ENCODE measurements at regions of chr7 and their contacts with region 1.

Region 1: GRCh38 chr7:150435390-150436073 is 14.9 kb upstream of the GIMAP8 start:
- DNase-seq: peak; percentile 74
- ATAC-seq: peak; percentile 92
- H3K4me3 Mint-ChIP-seq: peak overlapping the region; percentile 73
- H3K27ac Mint-ChIP-seq: peak overlapping the region; percentile 96
- H3K4me1 Mint-ChIP-seq: peaks cover 63% of the 10 kb centered on the region
- H3K27me3 Mint-ChIP-seq: peaks cover 2% of the 10 kb centered on the region
- CTCF ChIP-seq: no peak

Region 2: GRCh38 chr7:149873074-149873969 is 562.2 kb before region 1 on chr7 and contains the start of gene ATP6V0E2:
- CTCF ChIA-PET with region 1: no interaction called
- POLR2A ChIA-PET with region 1: no interaction called
- intact Hi-C with region 1: loop called (anchors 5 kb)
- DNase-seq: peak; percentile 86
- ATAC-seq: peak; percentile 95
- H3K4me3 Mint-ChIP-seq: peak within 1 kb of the TSS; percentile 86
- H3K27ac Mint-ChIP-seq: peak within 1 kb of the TSS; percentile 53
- H3K4me1 Mint-ChIP-seq: peaks cover 42% of the 10 kb centered on the region
- H3K27me3 Mint-ChIP-seq: no peaks in the 10 kb centered on the region
- CTCF ChIP-seq: no peak
- total RNA-seq, gene ATP6V0E2: 9.1 and 10.4 TPM in 2 replicates

Region 3: GRCh38 chr7:150322833-150323681 is 112.5 kb before region 1 on chr7 and contains the starts of genes ACTR3C and LRRC61:
- CTCF ChIA-PET with region 1: no interaction called
- POLR2A ChIA-PET with region 1: no interaction called
- intact Hi-C with region 1: loop called (anchors 1 kb)
- DNase-seq: peak; percentile 64
- ATAC-seq: peak; percentile 67
- H3K4me3 Mint-ChIP-seq: peak within 1 kb of the TSS; percentile 93
- H3K27ac Mint-ChIP-seq: peak within 1 kb of the TSS; percentile 92
- H3K4me1 Mint-ChIP-seq: peaks cover 54% of the 10 kb centered on the region
- H3K27me3 Mint-ChIP-seq: no peaks in the 10 kb centered on the region
- CTCF ChIP-seq: no peak
- total RNA-seq, gene ACTR3C: 10.1 and 14.3 TPM in 2 replicates
- total RNA-seq, gene LRRC61: 10.7 and 11.0 TPM in 2 replicates

Region 4: GRCh38 chr7:150368096-150368883 is 67.2 kb before region 1 on chr7 and contains the start of gene REPIN1:
- CTCF ChIA-PET with region 1: no interaction called
- POLR2A ChIA-PET with region 1: interaction called, 6 read pairs
- intact Hi-C with region 1: loop called (anchors 1 kb)
- DNase-seq: peak; percentile 85
- ATAC-seq: peak; percentile 43
- H3K4me3 Mint-ChIP-seq: peak within 1 kb of the TSS; percentile 95
- H3K27ac Mint-ChIP-seq: peak within 1 kb of the TSS; percentile 95
- H3K4me1 Mint-ChIP-seq: peaks cover 72% of the 10 kb centered on the region
- H3K27me3 Mint-ChIP-seq: no peaks in the 10 kb centered on the region
- CTCF ChIP-seq: no peak
- total RNA-seq, gene REPIN1: 106 and 116 TPM in 2 replicates

Region 5: GRCh38 chr7:150448789-150449147 is 13.2 kb after region 1 on chr7:
- CTCF ChIA-PET with region 1: interaction called, 7 read pairs
- POLR2A ChIA-PET with region 1: interaction called, 4 read pairs
- intact Hi-C with region 1: loop called (anchors 1 kb)
- DNase-seq: peak; percentile 55
- ATAC-seq: peak; percentile 86
- H3K4me3 Mint-ChIP-seq: peak overlapping the region; percentile 9
- H3K27ac Mint-ChIP-seq: no peak overlapping the region
- H3K4me1 Mint-ChIP-seq: peaks cover 41% of the 10 kb centered on the region
- H3K27me3 Mint-ChIP-seq: peaks cover 7% of the 10 kb centered on the region
- CTCF ChIP-seq: peak; percentile 91

Region 6: DNA sequence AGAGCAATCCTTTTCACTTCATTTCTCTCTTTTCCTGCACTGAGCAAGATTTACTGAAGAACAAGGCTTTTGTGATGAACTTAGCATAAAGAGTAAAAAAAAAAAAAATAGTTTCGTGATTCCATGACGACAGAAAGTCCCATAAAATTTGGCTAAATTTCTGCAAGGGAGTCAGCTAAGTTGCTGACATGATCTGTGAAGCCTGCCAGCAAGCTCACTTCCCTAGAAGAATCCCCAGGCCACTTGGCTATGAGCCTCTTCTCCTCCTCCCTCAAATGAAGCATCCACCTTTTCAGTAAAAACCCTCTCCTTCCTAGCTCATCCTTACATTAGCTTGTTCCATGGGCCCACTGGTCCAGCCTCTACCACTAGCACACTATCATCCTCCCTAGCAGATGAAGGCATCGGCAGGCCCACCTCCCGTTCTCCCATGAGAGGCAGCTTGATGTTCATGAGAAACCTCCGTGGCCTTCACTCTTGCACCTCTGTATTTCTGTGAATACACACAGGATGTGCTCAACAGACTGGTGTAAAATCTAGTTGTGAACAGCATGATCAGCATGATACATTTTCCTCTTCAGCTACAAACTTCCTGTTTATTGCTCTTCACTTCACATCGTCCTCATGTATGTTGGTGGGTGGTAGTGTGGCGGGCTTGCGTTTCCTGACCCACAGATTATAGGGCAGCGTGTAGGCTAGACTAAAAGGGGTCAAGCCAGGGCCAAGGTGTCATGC is 45.8 kb after region 1 on chr7:
- CTCF ChIA-PET with region 1: no interaction called
- POLR2A ChIA-PET with region 1: no interaction called
- intact Hi-C with region 1: no loop called
- DNase-seq: no peak
- ATAC-seq: no peak
- H3K4me3 Mint-ChIP-seq: no peak overlapping the region
- H3K27ac Mint-ChIP-seq: no peak overlapping the region
- H3K4me1 Mint-ChIP-seq: peaks cover 17% of the 10 kb centered on the region
- H3K27me3 Mint-ChIP-seq: peaks cover 8% of the 10 kb centered on the region
- CTCF ChIP-seq: no peak

Region 7: DNA sequence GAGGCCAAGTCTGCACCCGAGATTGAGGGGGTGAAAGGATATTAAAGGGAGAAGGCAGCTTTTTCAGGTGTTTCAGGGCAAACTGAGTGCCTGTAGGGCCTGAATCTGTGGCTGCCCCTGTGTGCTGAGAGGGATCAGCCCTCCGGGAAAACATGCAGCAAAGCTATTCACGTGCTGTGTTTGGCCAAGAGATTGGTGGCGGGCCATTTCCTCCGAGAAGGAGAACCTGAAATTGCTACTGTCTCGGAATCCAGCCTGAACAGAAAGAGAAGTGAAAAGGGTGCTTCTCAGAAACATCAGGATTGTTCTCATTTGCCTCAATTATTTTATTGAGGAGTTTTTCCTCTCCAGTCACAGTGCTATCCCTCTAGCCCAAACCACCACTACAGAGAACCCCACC is 317.7 kb after region 1 on chr7:
- CTCF ChIA-PET with region 1: no interaction called
- POLR2A ChIA-PET with region 1: no interaction called
- intact Hi-C with region 1: no loop called
- DNase-seq: no peak
- ATAC-seq: no peak
- H3K4me3 Mint-ChIP-seq: no peak overlapping the region
- H3K27ac Mint-ChIP-seq: no peak overlapping the region
- H3K4me1 Mint-ChIP-seq: peaks cover 4% of the 10 kb centered on the region
- H3K27me3 Mint-ChIP-seq: peaks cover 11% of the 10 kb centered on the region
- CTCF ChIP-seq: no peak

Region 8: DNA sequence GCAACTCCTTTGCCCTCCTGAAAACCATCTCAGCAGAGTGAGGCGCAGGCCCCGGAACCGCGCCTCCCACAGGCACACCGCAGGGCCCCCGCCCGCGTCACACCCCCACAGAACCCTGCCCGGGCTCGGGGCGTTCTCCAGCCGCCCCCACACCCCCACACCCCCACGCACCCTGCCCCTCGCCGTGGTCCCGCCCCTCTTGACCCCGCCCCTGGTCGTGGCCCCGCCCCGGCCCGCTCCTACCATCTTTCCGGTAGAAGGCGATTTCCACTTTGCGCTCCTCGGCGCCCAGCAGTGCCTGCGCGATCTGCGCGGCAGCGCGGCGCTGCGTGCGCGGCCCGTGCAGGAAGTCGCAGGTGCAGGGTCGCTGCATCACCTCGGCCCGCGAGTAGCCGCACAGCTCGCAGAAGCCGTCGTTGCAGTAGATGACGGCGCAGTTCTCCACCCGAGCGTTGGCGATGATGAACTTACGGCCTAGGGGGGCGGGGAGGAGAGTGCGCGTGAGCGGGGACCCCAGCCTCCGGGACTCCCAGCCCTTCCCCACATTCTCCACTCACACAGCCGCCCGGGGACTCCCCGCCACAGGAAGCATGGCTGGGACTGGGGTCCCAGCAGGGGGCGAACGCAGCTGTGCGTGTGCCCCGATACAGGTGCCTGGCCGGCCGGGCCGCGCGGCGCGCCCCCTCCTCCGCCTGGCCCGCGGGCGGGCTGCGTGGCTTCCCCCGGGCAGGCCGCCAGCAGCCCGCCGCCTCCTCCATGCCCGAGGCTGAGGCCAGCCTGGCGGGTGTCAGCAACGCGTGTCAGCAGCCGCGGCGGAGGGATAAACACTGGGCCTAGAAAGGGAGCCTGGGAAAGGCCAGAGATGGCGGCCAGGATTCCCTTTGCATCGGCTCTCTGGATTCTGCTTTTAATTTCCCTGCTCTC is 539.2 kb after region 1 on chr7:
- CTCF ChIA-PET with region 1: no interaction called
- POLR2A ChIA-PET with region 1: no interaction called
- intact Hi-C with region 1: loop called (anchors 5 kb)
- DNase-seq: peak; percentile 54
- ATAC-seq: peak; percentile 84
- H3K4me3 Mint-ChIP-seq: peak overlapping the region; percentile 85
- H3K27ac Mint-ChIP-seq: no peak overlapping the region
- H3K4me1 Mint-ChIP-seq: peaks cover 41% of the 10 kb centered on the region
- H3K27me3 Mint-ChIP-seq: peaks cover 29% of the 10 kb centered on the region
- CTCF ChIP-seq: no peak

Measured in activated B cell treated with CpG ODN at 0.5 μM for 24 hours (primary cell).